ENCODE measurements at regions of chr13 and their contacts with region 1.

Region 1: DNA sequence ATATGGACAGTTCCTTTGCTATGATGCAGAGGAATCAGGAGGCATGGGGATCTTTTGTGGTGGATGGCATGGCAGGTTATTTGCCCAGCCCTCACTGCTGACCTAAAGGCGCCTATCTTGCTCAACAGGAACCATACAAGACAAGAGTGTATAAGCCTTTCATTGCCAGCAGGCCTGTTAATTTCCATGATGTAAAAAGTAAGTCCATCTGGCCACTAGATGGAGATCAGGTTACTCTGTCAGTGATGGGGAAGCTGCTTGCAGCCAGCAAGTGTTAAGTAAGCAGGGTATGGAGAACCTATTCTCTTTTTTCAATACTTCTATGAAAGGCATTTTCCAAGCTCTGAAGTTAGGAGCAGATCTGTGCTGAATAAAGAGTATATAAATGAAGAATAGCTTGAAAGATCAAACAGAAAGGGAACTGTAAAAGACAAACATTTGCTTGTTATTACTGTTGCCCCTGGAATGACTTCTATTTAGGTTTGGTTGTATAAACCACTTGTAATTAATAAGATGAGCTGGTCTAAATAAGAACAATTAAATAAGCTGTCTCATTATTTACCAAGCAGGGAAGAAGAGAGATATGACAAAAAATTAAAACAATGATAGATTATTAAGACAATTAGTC is 210.9 kb downstream of the RGCC start:
- DNase-seq: peak; percentile 94
- H3K4me3 ChIP-seq: no peak overlapping the region
- H3K27ac ChIP-seq: no peak overlapping the region
- H3K4me1 ChIP-seq: no peaks in the 10 kb centered on the region
- H3K27me3 ChIP-seq: no peaks in the 10 kb centered on the region
- CTCF ChIP-seq: peak; percentile 54 to 67
- POLR2A ChIP-seq: no peak

Region 2: DNA sequence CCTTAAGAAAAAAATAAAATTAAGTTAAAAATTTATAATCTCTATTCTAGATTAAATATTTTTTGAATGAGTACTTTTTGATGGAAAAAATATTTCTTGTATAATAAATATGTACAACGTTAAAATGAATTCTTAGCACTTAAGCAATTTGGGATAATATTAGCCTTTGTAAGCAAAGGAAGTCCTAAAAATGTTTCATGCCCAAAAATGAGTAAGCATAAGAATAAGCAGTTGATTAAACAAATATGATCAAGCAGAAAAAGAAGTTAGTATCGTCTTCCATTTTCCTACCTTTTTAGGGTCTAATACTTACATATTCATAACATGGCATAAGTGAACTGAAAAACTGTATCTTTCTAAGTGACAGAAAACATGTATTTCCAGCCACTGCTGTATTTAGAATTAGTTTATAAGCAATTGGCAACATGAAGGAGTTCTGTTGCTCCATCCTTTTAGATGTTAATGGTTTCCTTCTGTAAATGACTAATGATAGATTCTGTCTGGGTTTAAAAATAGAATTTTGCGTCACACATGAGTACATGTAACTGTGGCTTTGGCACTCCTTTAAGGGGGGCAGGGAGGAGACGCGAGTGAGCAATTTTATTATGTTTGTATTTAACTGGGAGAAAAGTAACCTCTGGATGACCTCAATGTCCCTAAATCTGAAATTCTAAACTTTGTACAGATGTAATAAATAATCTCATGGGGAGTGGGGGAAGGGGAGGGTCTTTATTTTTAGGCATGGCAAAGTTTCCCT is 26.5 kb after region 1 on chr13:
- CTCF ChIA-PET with region 1: interaction called, 16 read pairs
- POLR2A ChIA-PET with region 1: no interaction called
- dilution Hi-C with region 1: no loop called
- intact Hi-C with region 1: no loop called
- DNase-seq: peak; percentile 93
- H3K4me3 ChIP-seq: peak overlapping the region in 1 of 3 experiments; percentile 30
- H3K27ac ChIP-seq: peak overlapping the region; percentile 88
- H3K4me1 ChIP-seq: peaks cover 34% of the 10 kb centered on the region
- H3K27me3 ChIP-seq: no peaks in the 10 kb centered on the region
- CTCF ChIP-seq: no peak
- POLR2A ChIP-seq: no peak

Region 3: DNA sequence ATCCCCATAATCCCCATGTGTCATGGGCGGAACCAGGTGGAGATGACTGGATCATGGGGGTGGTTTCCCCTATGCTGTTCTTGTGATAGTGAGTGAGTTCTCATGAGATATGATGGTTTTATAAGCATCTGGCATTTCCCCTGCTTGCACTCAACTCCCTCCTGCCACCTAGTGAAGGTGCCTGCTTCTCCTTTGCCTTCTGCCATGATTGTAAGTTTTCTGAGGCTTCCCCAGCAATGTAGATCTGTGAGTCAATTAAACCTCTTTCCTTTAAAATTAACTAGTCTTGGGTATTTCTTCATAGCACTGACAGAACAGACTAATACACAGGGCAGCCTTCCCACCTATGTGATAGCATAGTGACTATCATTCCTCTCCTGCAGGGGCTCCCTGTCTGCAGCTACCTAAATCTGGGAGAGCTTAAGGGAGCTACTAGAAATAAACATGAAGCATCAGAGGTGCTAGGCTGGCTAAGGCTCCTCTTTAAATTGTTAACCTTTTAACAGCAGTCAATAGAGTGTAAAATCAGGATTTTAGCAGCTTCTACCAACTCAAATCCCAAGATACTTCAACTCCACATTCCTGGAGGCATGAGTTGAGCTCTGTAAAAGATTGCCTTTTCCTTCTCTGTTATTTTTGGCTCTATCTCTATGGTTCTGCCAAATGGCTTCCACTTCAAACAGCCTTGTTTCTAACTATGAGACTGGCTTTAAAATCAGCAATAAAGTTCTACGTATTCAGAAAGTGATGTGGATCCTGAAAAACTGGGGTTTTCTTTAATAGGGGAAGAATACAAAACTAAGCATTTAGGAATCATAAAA is 180.4 kb after region 1 on chr13:
- CTCF ChIA-PET with region 1: interaction called, 5 read pairs
- POLR2A ChIA-PET with region 1: no interaction called
- dilution Hi-C with region 1: no loop called
- intact Hi-C with region 1: loop called (anchors 10 kb)
- DNase-seq: no peak
- H3K4me3 ChIP-seq: no peak overlapping the region
- H3K27ac ChIP-seq: no peak overlapping the region
- H3K4me1 ChIP-seq: no peaks in the 10 kb centered on the region
- H3K27me3 ChIP-seq: no peaks in the 10 kb centered on the region
- CTCF ChIP-seq: no peak
- POLR2A ChIP-seq: no peak

Region 4: DNA sequence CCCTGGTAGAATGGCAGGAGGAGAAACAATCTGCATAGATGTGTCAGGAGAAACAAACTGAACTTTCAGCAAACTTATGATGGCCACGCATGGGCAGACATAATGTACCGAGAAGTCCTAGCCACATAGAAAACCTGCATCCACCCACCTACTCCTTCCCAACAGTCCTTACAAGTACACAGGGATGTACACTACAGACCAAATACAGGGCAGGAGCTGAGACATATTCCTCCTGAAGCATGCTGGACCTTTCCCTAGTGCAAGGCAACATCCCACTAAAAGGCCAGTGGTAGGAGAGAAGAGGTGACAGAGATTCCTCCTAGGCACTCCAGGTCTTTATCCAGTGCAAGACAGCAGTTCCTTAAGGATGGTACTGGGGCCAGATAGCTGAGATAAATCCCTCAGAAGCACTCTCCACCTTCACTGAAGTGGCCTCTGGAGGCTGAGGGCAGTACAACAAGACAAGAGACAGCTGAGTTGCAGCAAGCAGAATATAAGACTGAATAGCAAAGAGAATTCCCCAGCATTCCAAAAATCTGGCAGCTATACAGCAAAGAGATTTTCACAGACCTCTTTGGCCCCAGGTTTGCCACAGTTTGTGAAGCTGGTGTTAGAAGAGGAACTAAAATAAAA is 274.3 kb after region 1 on chr13:
- CTCF ChIA-PET with region 1: interaction called, 27 read pairs
- POLR2A ChIA-PET with region 1: no interaction called
- dilution Hi-C with region 1: no loop called
- intact Hi-C with region 1: no loop called
- DNase-seq: peak; percentile 39
- H3K4me3 ChIP-seq: no peak overlapping the region
- H3K27ac ChIP-seq: no peak overlapping the region
- H3K4me1 ChIP-seq: no peaks in the 10 kb centered on the region
- H3K27me3 ChIP-seq: no peaks in the 10 kb centered on the region
- CTCF ChIP-seq: peak in 1 of 2 donors; percentile 11
- POLR2A ChIP-seq: no peak

Region 5: DNA sequence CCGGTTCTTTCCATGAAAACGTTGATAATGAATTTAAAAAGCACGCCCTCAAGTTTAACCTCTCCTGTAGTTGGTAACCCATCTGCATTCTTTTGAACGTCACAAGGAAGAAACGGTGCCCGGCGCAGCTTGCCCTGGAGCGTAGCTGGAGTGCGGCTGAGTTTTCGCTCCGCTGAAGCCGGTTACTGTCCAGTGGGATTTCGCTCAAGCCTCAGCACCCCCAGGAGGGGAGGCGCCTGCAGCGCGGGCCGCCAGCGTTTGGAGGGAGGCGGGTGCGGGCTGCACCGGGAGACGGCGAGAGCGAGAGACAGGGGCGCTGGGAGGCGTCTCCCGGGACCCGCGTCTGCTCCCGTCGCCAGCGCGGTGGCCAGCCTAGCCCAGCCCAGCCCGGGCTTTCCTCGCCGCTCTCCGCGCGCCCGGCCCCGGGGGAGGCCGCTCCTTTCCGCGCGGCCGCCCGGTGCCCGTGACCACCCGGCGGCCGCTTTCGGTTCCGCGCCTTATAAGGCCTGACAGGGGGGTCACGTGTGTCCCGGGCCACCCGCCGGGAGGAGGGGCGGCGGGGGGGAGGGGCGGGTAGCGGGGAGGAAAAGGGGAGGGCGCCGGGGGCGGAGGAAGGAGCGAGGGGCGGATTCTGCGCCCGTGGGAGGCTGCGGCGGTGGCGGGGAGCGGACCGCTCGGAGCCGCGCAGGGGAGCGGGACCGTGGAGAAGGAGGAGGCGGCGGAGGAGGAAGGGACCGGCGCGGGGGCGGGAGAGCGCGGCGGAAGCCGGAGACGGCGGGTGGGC is 371.9 kb after region 1 on chr13:
- CTCF ChIA-PET with region 1: interaction called, 43 read pairs
- POLR2A ChIA-PET with region 1: no interaction called
- dilution Hi-C with region 1: no loop called
- intact Hi-C with region 1: loop called (anchors 2 kb)
- DNase-seq: peak; percentile 83
- H3K4me3 ChIP-seq: peak overlapping the region; percentile 60 to 85 (median 69)
- H3K27ac ChIP-seq: peak overlapping the region; percentile 65
- H3K4me1 ChIP-seq: peaks cover 12% of the 10 kb centered on the region
- H3K27me3 ChIP-seq: no peaks in the 10 kb centered on the region
- CTCF ChIP-seq: no peak
- POLR2A ChIP-seq: peak; percentile 93

Region 6: GRCh38 chr13:42215578-42216421 is 547.6 kb after region 1 on chr13:
- CTCF ChIA-PET with region 1: interaction called, 11 read pairs
- POLR2A ChIA-PET with region 1: no interaction called
- dilution Hi-C with region 1: no loop called
- intact Hi-C with region 1: no loop called
- DNase-seq: peak; percentile 48
- H3K4me3 ChIP-seq: no peak overlapping the region
- H3K27ac ChIP-seq: no peak overlapping the region
- H3K4me1 ChIP-seq: no peaks in the 10 kb centered on the region
- H3K27me3 ChIP-seq: no peaks in the 10 kb centered on the region
- CTCF ChIP-seq: peak; percentile 32 to 36
- POLR2A ChIP-seq: no peak